Ascending aorta (tissue), 2 donors: ENCODE measurements at regions of chr14 and their contacts with region 1.

Region 1: GRCh38 chr14:51996148-51996746 is 6.9 kb downstream of the RTRAF start:
- DNase-seq: no peak
- H3K4me3 ChIP-seq: no peak overlapping the region
- H3K27ac ChIP-seq: no peak overlapping the region
- H3K4me1 ChIP-seq: no peaks in the 10 kb centered on the region
- H3K27me3 ChIP-seq: no peaks in the 10 kb centered on the region
- CTCF ChIP-seq: peak; percentile 63 to 78 (median 72)

Region 2: GRCh38 chr14:52031781-52032180 is 35.5 kb after region 1 on chr14:
- intact Hi-C with region 1: no loop called
- DNase-seq: peak; percentile 53 to 90
- H3K4me3 ChIP-seq: peak overlapping the region in 1 of 2 donors; percentile 3
- H3K27ac ChIP-seq: peak overlapping the region; percentile 41 to 68
- H3K4me1 ChIP-seq: peaks cover 0 to 11% of the 10 kb centered on the region in 2 donors
- H3K27me3 ChIP-seq: no peaks in the 10 kb centered on the region
- CTCF ChIP-seq: no peak

Region 3: DNA sequence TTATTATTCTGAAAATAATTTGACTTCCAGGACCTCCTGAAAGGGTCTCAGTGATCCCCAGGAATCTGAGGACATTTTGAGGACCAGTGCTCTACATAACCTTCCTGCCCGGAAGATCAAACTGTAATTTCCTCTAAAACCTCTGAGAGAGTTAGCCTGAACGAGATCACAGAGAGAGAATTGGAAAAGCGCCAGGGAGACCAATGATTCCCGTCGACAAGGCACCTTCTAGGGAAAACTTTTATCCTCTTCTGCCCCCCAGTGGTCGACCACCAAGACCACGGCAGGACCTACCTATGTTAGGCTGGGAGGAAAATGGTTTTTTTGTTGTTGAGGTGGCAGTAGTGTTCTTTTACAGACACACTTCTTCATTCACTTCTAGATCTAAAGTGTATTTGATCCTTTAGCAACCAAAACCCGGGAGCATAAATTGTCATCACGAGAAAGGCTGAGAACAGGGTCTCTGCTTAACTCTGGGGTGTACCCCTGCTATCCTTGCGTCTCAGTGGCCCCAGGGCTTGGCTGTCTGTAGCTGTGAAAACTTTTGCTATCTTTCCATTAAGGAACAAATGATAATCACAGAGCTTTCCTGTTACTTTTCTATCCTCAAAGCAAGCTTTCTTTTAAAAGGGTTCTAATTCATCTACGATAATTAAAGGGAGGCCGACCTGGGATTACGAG is 135.5 kb after region 1 on chr14:
- intact Hi-C with region 1: loop called (anchors 1 kb)
- DNase-seq: peak in 1 of 2 donors; percentile 83
- H3K4me3 ChIP-seq: no peak overlapping the region
- H3K27ac ChIP-seq: no peak overlapping the region
- H3K4me1 ChIP-seq: no peaks in the 10 kb centered on the region
- H3K27me3 ChIP-seq: no peaks in the 10 kb centered on the region
- CTCF ChIP-seq: peak; percentile 55 to 72 (median 65)

Region 4: GRCh38 chr14:52154992-52155650 is 158.9 kb after region 1 on chr14:
- intact Hi-C with region 1: no loop called
- DNase-seq: no peak
- H3K4me3 ChIP-seq: no peak overlapping the region
- H3K27ac ChIP-seq: no peak overlapping the region
- H3K4me1 ChIP-seq: no peaks in the 10 kb centered on the region
- H3K27me3 ChIP-seq: no peaks in the 10 kb centered on the region
- CTCF ChIP-seq: no peak